ENCODE measurements at regions of chr1 and their contacts with region 1.

Region 1: GRCh38 chr1:21324368-21325141 is 34.3 kb upstream of the ECE1 start:
- DNase-seq: peak; percentile 40
- H3K4me3 Mint-ChIP-seq: peak overlapping the region; percentile 71
- H3K27ac Mint-ChIP-seq: peak overlapping the region; percentile 95
- H3K4me1 Mint-ChIP-seq: peaks cover 68% of the 10 kb centered on the region
- H3K27me3 Mint-ChIP-seq: peaks cover 2% of the 10 kb centered on the region

Region 2: GRCh38 chr1:21362096-21362495 is 37.5 kb after region 1 on chr1:
- intact Hi-C with region 1: loop called (anchors 2 kb)
- DNase-seq: no peak
- H3K4me3 Mint-ChIP-seq: no peak overlapping the region
- H3K27ac Mint-ChIP-seq: no peak overlapping the region
- H3K4me1 Mint-ChIP-seq: no peaks in the 10 kb centered on the region
- H3K27me3 Mint-ChIP-seq: peaks cover 7% of the 10 kb centered on the region

Region 3: GRCh38 chr1:21397813-21398188 is 73.2 kb after region 1 on chr1:
- intact Hi-C with region 1: no loop called
- DNase-seq: no peak
- H3K4me3 Mint-ChIP-seq: peak overlapping the region; percentile 22
- H3K27ac Mint-ChIP-seq: no peak overlapping the region
- H3K4me1 Mint-ChIP-seq: no peaks in the 10 kb centered on the region
- H3K27me3 Mint-ChIP-seq: peaks cover 33% of the 10 kb centered on the region

Region 4: DNA sequence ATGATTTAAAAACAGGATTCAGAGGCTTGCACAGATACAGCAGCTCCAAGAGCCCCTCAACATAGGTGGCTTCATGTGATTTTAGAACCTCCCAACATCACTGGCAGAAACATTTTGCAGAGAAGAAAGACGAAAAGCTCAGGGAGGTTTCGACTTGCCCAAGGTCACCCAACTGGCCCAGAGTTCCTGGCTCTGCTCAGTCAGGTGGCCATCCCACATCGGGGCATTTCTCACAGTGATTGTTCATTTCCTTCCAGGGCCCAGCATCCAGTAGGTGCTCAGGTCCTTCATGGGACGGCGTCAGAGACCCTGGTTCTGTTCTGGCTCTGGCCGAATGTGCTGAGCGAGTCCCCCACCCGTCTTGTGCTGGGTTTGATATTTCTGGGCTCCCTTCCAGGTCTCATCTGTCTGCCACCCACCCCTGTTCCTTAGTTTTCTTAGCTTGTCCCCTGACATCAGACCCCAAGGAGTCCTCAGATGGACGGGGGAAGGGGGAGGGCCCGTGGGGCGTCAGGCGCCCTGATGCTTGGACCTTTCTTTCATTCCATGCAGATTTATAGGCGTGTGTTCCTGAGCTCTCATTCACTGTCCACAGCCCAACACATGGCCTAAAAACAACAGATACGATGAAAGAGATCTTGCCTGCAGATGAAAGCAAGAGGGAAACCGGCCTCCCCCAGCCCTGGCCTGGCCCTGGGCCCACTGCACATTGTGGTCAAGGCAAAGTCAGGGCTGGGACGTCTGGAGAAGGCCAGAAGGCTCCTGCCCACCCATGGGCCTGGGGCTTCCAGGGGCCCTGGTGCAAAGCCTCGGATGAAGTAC is 1004.0 kb after region 1 on chr1:
- intact Hi-C with region 1: no loop called
- DNase-seq: no peak
- H3K4me3 Mint-ChIP-seq: no peak overlapping the region
- H3K27ac Mint-ChIP-seq: no peak overlapping the region
- H3K4me1 Mint-ChIP-seq: no peaks in the 10 kb centered on the region
- H3K27me3 Mint-ChIP-seq: peaks cover 4% of the 10 kb centered on the region

Measured in activated T-helper 1 cell treated with anti-CD3 and anti-CD28 coated beads, Interleukin-12 subunit alpha, Interleukin-12 subunit beta, Interleukin-2, Interleukin-4 antibody, amounts not matched to agents 30 ng/mL and 10 ng/mL and 1 ng/mL, durations not matched to agents 14 hours and 24 hours and 36 hours (primary cell).